Mammary epithelial cell (primary cell): ENCODE measurements at regions of chr13 and their contacts with region 1.

Region 1: DNA sequence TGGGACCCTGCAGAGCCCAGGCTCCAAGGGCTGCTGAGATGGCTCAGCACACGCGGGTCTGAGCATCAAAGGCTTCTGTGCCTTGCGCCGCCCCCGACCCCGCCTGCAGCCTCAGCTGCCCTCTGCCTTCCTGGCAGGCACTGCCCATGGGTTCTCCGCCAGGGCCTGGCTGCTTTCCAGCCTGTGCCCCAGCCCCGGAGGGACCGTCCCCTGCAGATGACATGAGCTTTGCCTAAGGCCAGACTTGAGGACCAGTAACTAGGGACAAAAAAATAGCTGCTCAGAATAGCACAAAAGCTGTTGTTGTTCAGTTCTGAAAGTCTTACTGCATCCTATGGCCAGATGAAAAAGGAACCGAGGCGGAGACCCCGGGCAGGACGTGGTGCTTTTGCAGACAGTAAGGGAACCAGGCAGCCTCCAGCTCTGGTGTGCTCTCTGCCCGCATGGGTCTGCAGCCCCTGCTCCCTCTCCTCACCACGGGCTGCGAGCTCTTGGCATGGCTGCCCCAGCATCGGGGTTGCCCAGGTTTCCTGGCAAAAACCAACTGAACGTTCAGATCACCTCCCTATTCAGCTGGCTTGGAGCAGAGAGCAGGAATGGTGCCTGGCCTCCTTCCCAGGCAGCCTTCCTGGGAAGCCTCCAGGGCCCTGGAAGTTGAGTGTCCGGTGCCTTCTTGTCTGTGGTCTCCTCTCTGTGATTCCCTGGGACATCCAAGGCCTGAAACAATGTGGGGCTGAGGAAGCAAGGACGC is 12.5 kb upstream of the CFAP97D2 start:
- DNase-seq: no peak
- H3K4me3 ChIP-seq: no peak overlapping the region
- H3K27ac ChIP-seq: no peak overlapping the region
- H3K4me1 ChIP-seq: no peaks in the 10 kb centered on the region
- H3K27me3 ChIP-seq: peaks cover 10% of the 10 kb centered on the region
- CTCF ChIP-seq: no peak

Region 2: DNA sequence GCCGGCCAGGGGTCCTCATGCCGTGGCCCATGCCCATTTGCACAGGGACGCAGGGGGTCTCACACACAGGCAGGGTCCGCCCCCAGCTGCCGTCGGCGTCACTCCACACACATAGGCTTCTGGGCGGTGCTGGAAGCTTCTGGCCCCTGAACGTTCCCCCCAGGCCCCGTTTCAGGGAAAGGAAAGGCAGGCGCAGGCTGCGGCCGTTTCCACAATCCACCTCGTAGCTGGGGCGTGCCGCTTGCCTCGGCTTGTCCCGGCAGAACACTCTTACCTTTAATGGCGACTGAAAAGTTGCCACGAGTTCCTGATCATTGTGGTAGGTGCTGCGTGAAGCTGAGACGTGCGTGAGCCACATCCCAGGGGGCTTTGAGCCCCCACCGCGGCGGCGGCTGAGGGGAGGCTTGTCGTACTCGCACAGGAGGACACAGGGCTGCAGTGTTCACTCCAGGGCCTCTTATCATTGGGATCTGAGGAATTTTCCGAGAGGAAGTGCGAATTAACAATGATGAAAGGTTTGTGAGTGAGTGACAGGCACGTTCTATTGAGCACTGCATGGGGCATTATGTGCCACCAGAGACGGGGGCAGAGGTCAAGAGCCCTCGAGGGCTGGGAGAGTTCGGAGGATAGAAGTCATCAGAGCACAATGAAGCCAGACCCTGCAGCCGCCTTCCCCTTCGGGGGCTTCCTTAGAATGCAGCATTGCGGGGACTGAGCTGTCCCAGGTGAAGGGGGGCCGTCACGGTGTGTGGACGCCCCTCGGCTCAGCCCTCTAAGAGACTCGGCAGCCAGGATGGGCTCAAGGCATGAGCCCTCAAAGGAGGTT is 1144.0 kb before region 1 on chr13:
- CTCF ChIA-PET with region 1: no interaction called
- dilution Hi-C with region 1: no loop called
- in situ Hi-C with region 1: no loop called
- intact Hi-C with region 1: no loop called
- DNase-seq: no peak
- H3K4me3 ChIP-seq: no peak overlapping the region
- H3K27ac ChIP-seq: no peak overlapping the region
- H3K4me1 ChIP-seq: peaks cover 11% of the 10 kb centered on the region
- H3K27me3 ChIP-seq: no peaks in the 10 kb centered on the region
- CTCF ChIP-seq: no peak

Region 3: DNA sequence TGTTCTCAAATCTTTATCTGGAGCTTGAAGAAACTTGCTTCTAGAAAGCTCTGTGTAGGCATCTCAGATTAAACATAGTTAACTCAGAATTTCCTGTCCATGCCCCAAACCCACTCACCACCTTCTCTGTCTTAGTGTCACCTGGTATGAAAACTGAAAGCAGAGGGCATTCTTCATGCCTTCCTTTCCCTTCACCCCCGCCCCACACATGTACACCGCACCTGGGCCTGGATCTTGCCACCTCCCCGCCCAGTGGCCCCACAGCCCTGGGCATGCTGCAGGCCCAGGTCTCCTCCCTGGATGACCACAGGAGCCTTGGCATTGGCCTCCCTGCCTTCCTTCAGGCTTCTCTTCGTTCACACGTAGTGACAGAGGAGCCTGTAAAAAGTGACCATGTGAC is 28.3 kb after region 1 on chr13:
- CTCF ChIA-PET with region 1: no interaction called
- dilution Hi-C with region 1: no loop called
- in situ Hi-C with region 1: no loop called
- intact Hi-C with region 1: no loop called
- DNase-seq: no peak
- H3K4me3 ChIP-seq: no peak overlapping the region
- H3K27ac ChIP-seq: no peak overlapping the region
- H3K4me1 ChIP-seq: peaks cover under 1% of the 10 kb centered on the region
- H3K27me3 ChIP-seq: no peaks in the 10 kb centered on the region
- CTCF ChIP-seq: no peak

Region 4: GRCh38 chr13:114204894-114205293 is 38.3 kb after region 1 on chr13:
- CTCF ChIA-PET with region 1: no interaction called
- dilution Hi-C with region 1: loop called (anchors 5 kb)
- in situ Hi-C with region 1: no loop called
- intact Hi-C with region 1: no loop called
- DNase-seq: no peak
- H3K4me3 ChIP-seq: no peak overlapping the region
- H3K27ac ChIP-seq: no peak overlapping the region
- H3K4me1 ChIP-seq: peaks cover 12% of the 10 kb centered on the region
- H3K27me3 ChIP-seq: no peaks in the 10 kb centered on the region
- CTCF ChIP-seq: no peak